Activated CD8-positive, alpha-beta T cell treated with anti-CD3 and anti-CD28 coated beads for 36 hours (primary cell): ENCODE measurements at regions of chr2 and their contacts with region 1.

Region 1: GRCh38 chr2:8477552-8478470 is 204.0 kb upstream of the ID2 start:
- DNase-seq: peak; percentile 68
- ATAC-seq: peak; percentile 44
- H3K4me3 Mint-ChIP-seq: peak overlapping the region; percentile 8
- H3K27ac Mint-ChIP-seq: peak overlapping the region; percentile 78
- H3K4me1 Mint-ChIP-seq: peaks cover 86% of the 10 kb centered on the region
- H3K27me3 Mint-ChIP-seq: peaks cover 6% of the 10 kb centered on the region
- CTCF ChIP-seq: no peak

Region 2: DNA sequence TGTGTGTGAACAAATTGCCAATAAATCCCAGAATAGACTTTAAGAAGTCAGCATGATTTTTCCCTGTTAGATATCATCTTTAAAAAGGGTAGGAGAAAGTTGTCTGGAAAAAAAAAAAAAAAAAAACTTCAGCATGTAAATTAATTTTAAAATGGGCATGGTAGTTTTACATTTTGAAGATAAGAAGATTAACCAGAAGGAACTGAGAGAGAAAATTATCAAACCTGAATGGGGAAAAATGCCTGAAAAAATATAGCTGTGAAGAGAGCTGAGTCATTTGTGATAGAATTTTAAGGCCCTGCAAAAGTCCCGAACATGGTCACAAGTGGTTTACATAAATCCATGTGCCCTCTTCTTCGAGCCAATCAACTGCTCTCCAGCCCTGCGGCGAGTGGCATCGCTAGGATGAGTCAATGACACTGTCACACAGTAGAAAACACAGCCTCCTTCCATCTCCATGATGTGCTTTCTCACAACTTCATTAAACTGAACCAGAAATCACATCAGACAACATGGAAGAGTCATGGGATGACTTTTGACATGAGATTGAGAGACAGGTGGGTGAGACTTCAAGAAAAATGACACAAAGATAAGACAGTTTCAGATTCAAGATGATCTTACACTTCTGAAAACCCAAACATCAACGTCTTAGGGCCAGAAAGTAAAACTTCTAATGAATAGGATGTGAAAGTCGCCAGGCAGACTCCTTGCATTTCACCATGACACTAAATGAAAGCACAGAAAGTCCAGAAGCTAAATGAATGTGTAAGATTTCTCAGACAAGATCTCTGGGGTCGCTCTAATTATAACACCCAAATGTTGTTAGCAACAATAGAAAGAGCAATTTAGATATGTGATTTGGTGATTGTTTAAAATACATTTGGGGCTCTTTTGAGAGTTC is 69.0 kb before region 1 on chr2:
- CTCF ChIA-PET with region 1: no interaction called
- POLR2A ChIA-PET with region 1: interaction called, 4 read pairs
- intact Hi-C with region 1: loop called (anchors 5 kb)
- DNase-seq: peak; percentile 82
- ATAC-seq: peak; percentile 95
- H3K4me3 Mint-ChIP-seq: no peak overlapping the region
- H3K27ac Mint-ChIP-seq: peak overlapping the region; percentile 66
- H3K4me1 Mint-ChIP-seq: peaks cover 22% of the 10 kb centered on the region
- H3K27me3 Mint-ChIP-seq: peaks cover 1% of the 10 kb centered on the region
- CTCF ChIP-seq: no peak

Region 3: GRCh38 chr2:9385841-9386240 is 908.0 kb after region 1 on chr2:
- CTCF ChIA-PET with region 1: no interaction called
- POLR2A ChIA-PET with region 1: no interaction called
- intact Hi-C with region 1: no loop called
- DNase-seq: no peak
- ATAC-seq: no peak
- H3K4me3 Mint-ChIP-seq: no peak overlapping the region
- H3K27ac Mint-ChIP-seq: no peak overlapping the region
- H3K4me1 Mint-ChIP-seq: no peaks in the 10 kb centered on the region
- H3K27me3 Mint-ChIP-seq: no peaks in the 10 kb centered on the region
- CTCF ChIP-seq: no peak